Activated CD4-positive, alpha-beta memory T cell treated with anti-CD3 and anti-CD28 coated beads, Interleukin-2, amount 10 ng/mL, durations not matched to agents 7 days and 5 days (primary cell): ENCODE measurements at regions of chr9 and their contacts with region 1.

Region 1: GRCh38 chr9:76704593-76705204 is 59.5 kb upstream of the PCA3 start:
- DNase-seq: no peak
- H3K4me3 Mint-ChIP-seq: no peak overlapping the region
- H3K27ac Mint-ChIP-seq: no peak overlapping the region
- H3K4me1 Mint-ChIP-seq: peaks cover 6% of the 10 kb centered on the region
- H3K27me3 Mint-ChIP-seq: peaks cover 43% of the 10 kb centered on the region

Region 2: GRCh38 chr9:76448501-76448900 is 256.2 kb before region 1 on chr9:
- CTCF ChIA-PET with region 1: interaction called, 13 read pairs
- POLR2A ChIA-PET with region 1: no interaction called
- DNase-seq: no peak
- H3K4me3 Mint-ChIP-seq: no peak overlapping the region
- H3K27ac Mint-ChIP-seq: no peak overlapping the region
- H3K4me1 Mint-ChIP-seq: peaks cover 33% of the 10 kb centered on the region
- H3K27me3 Mint-ChIP-seq: no peaks in the 10 kb centered on the region

Region 3: GRCh38 chr9:76667521-76667957 is 37.2 kb before region 1 on chr9:
- CTCF ChIA-PET with region 1: interaction called, 18 read pairs
- POLR2A ChIA-PET with region 1: no interaction called
- DNase-seq: no peak
- H3K4me3 Mint-ChIP-seq: no peak overlapping the region
- H3K27ac Mint-ChIP-seq: no peak overlapping the region
- H3K4me1 Mint-ChIP-seq: peaks cover 12% of the 10 kb centered on the region
- H3K27me3 Mint-ChIP-seq: peaks cover 7% of the 10 kb centered on the region

Region 4: GRCh38 chr9:76677481-76678055 is 27.1 kb before region 1 on chr9:
- CTCF ChIA-PET with region 1: no interaction called
- POLR2A ChIA-PET with region 1: no interaction called
- DNase-seq: no peak
- H3K4me3 Mint-ChIP-seq: no peak overlapping the region
- H3K27ac Mint-ChIP-seq: no peak overlapping the region
- H3K4me1 Mint-ChIP-seq: peaks cover 10% of the 10 kb centered on the region
- H3K27me3 Mint-ChIP-seq: no peaks in the 10 kb centered on the region